CD8-positive, alpha-beta T cell (primary cell): ENCODE measurements at regions of chr5 and their contacts with region 1.

Region 1: GRCh38 chr5:171323806-171324633 is 15.0 kb downstream of the TLX3 start:
- DNase-seq: no peak
- ATAC-seq: no peak
- H3K4me3 ChIP-seq: no peak overlapping the region
- H3K4me3 Mint-ChIP-seq: no peak overlapping the region
- H3K27ac ChIP-seq: no peak overlapping the region
- H3K27ac Mint-ChIP-seq: no peak overlapping the region
- H3K4me1 ChIP-seq: no peaks in the 10 kb centered on the region
- H3K4me1 Mint-ChIP-seq: no peaks in the 10 kb centered on the region
- H3K27me3 ChIP-seq: peaks cover 4 to 5% of the 10 kb centered on the region in 2 experiments
- H3K27me3 Mint-ChIP-seq: peaks cover 44% of the 10 kb centered on the region
- CTCF ChIP-seq: no peak

Region 2: GRCh38 chr5:172574871-172575223 is 1250.8 kb after region 1 on chr5:
- CTCF ChIA-PET with region 1: no interaction called
- POLR2A ChIA-PET with region 1: no interaction called
- intact Hi-C with region 1: loop called in 1 of 2 experiments (anchors 5 kb)
- DNase-seq: no peak
- ATAC-seq: no peak
- H3K4me3 ChIP-seq: no peak overlapping the region
- H3K4me3 Mint-ChIP-seq: no peak overlapping the region
- H3K27ac ChIP-seq: no peak overlapping the region
- H3K27ac Mint-ChIP-seq: no peak overlapping the region
- H3K4me1 ChIP-seq: no peaks in the 10 kb centered on the region
- H3K4me1 Mint-ChIP-seq: no peaks in the 10 kb centered on the region
- H3K27me3 ChIP-seq: peaks cover 0 to 3% of the 10 kb centered on the region in 2 experiments
- H3K27me3 Mint-ChIP-seq: peaks cover 8% of the 10 kb centered on the region
- CTCF ChIP-seq: no peak